ENCODE measurements at regions of chr3 and their contacts with region 1.

Region 1: DNA sequence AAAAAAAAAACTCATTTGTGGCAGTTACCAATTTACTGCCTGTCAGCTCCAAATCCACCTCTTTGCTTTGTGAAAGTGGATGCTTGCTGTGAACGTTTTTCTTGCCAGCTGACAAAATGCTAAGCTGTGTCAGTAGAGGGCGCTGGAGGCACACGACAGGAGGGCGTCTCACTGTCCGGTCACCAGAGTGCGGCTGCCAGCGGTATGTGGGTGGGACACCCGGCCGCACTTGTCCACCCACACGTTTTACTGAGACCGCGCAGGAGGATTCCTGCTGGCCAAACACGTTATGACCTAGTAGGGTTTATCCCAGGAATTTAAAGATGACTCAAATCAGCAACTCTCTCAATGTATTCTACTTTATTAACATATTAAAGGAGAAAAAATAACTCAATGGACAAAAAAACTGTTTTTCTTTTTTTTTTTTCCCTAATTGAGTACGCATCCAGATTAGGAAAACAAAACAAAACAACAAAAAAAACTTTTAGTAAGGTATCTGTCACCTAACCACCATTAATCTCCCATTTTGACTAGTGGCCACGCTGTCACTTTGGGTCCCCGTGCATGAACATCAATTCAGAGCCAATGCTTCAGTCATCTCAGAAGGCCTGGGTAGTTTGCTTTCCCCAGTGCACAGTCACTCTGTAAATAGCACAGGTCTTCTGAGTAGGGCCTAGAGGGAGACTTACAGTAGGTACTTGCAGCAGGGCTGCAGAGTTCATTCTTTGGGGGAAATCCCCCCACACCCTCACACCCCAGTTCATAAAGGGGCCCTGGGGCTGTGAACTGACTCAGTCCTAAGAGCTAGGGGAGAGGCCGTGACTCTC is 43.8 kb upstream of the RPL35A start:
- DNase-seq: peak; percentile 93
- ATAC-seq: peak; percentile 98
- H3K4me3 Mint-ChIP-seq: peak overlapping the region; percentile 20
- H3K27ac Mint-ChIP-seq: peak overlapping the region; percentile 75
- H3K4me1 Mint-ChIP-seq: peaks cover 24% of the 10 kb centered on the region
- H3K27me3 Mint-ChIP-seq: no peaks in the 10 kb centered on the region
- CTCF ChIP-seq: peak; percentile 96

Region 2: DNA sequence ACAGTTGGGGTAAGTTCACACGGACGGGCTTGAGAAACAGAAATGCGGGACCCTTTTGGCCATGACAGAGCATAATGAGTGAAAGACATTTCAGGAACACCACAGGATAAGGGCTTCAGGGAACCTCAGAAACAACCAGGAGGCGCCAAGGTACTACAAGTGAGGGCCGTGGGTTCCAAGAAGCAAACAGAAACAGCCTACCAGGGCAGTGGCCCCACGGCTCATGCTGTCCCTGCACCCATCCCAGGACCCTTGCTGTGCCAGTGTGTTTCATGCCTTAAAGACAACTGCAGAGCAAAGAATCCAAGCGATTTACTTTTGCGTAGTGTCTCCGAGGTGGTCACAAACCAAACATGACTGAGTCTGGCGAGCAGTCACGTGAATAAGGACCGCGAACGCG is 223.5 kb before region 1 on chr3:
- CTCF ChIA-PET with region 1: no interaction called
- POLR2A ChIA-PET with region 1: no interaction called
- intact Hi-C with region 1: no loop called
- DNase-seq: no peak
- ATAC-seq: no peak
- H3K4me3 Mint-ChIP-seq: no peak overlapping the region
- H3K27ac Mint-ChIP-seq: no peak overlapping the region
- H3K4me1 Mint-ChIP-seq: no peaks in the 10 kb centered on the region
- H3K27me3 Mint-ChIP-seq: no peaks in the 10 kb centered on the region
- CTCF ChIP-seq: no peak

Region 3: DNA sequence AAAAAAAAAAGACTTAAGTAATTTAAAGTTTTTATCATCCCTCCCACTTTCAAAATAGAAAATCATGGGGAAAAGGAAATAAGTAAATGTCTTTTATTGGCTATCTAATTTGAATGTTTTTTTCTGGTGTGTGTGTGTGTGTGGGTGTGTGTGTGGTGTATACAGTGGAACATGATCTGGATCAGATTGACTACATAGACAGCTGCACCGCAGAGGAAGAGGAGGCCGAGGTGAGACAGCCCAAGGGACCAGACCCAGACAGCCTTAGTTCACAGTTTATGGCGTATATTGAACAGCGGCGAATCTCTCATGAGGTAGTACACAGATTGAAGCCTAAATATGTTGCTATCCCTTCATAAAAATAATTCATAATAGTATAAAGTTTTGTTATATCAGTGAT is 70.7 kb before region 1 on chr3:
- CTCF ChIA-PET with region 1: no interaction called
- POLR2A ChIA-PET with region 1: no interaction called
- intact Hi-C with region 1: no loop called
- DNase-seq: no peak
- ATAC-seq: no peak
- H3K4me3 Mint-ChIP-seq: no peak overlapping the region
- H3K27ac Mint-ChIP-seq: no peak overlapping the region
- H3K4me1 Mint-ChIP-seq: no peaks in the 10 kb centered on the region
- H3K27me3 Mint-ChIP-seq: no peaks in the 10 kb centered on the region
- CTCF ChIP-seq: no peak

Region 4: GRCh38 chr3:197889204-197889930 is 16.9 kb before region 1 on chr3:
- CTCF ChIA-PET with region 1: interaction called, 12 read pairs
- POLR2A ChIA-PET with region 1: no interaction called
- intact Hi-C with region 1: no loop called
- DNase-seq: no peak
- ATAC-seq: no peak
- H3K4me3 Mint-ChIP-seq: no peak overlapping the region
- H3K27ac Mint-ChIP-seq: no peak overlapping the region
- H3K4me1 Mint-ChIP-seq: peaks cover 5% of the 10 kb centered on the region
- H3K27me3 Mint-ChIP-seq: no peaks in the 10 kb centered on the region
- CTCF ChIP-seq: no peak

Region 5: DNA sequence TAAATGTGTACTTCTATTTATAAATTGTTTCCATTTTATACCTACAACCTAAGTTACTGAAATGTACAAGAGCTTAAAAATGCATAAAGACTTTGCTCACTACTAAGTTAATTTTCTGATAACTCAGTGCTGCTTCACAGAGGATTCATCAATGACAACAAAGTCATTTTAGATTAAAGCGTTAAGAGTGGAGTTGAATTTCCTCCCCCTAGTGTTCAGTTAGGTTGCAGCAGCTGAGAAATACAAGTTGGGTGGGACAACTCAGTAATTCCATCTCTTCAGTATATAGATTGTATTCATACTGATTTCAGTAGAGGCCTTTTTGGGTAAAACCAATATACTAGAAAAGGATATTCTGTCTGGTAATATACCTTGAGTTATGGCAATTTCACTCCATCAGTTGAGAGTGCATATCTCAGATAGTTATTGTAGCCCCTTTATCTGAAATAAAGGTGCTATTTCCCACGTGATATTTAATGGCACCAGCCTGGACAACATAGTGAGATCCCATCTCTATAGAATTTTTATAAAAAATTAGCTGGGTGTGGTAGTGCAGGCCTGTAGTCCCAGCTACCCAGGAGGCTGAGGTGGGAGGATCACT is 36.8 kb after region 1 on chr3:
- CTCF ChIA-PET with region 1: interaction called, 45 read pairs
- POLR2A ChIA-PET with region 1: interaction called, 3 read pairs
- intact Hi-C with region 1: loop called (anchors 5 kb)
- DNase-seq: peak; percentile 46
- ATAC-seq: peak; percentile 92
- H3K4me3 Mint-ChIP-seq: no peak overlapping the region
- H3K27ac Mint-ChIP-seq: no peak overlapping the region
- H3K4me1 Mint-ChIP-seq: peaks cover 4% of the 10 kb centered on the region
- H3K27me3 Mint-ChIP-seq: no peaks in the 10 kb centered on the region
- CTCF ChIP-seq: peak; percentile 91

Region 6: DNA sequence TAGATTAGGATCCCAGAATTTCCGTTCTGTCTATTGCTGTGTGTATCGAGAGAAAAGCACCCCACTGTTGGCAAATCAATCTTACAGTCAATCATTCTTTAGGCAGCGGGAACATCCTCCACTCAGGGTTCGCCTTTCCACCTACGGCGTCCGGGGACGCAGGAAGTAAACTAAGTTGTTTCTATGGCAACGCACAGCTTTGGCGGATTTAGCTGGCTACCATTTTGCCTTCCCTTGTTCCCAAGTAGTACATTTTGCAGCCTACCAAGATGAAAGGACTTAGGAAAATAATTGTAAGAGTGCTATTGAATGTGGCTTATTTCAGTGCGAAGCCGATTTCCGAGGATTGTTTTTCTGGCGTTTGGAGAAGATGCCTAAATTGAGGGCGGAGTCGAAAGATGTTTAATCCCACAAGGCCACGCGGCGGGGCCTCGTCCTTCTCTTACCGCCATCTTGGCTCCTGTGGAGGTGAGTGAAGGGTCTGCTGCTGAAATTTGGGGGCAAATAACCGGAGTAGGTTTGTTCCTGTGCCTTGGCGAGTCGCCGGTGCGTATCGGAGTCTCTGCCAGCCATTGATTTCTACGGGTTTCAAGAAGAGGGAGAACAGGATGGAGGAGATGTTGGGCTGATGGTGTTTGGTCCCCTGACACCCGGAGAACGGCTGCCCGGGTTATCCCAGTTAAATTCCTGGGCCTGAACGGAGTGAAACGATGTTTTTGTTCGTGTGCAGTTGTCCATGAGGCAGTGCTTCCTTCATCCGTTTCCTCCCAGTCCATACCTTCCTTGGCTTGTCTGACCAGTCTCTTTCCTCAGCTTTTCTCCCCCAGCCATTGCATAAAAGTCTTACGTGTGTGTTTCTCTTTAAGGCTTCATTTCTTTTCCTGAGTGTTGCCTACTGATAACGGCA is 43.8 kb after region 1 on chr3 and contains the start of gene RPL35A:
- CTCF ChIA-PET with region 1: interaction called, 11 read pairs
- POLR2A ChIA-PET with region 1: interaction called, 4 read pairs
- intact Hi-C with region 1: no loop called
- DNase-seq: peak; percentile 91
- ATAC-seq: peak; percentile 92
- H3K4me3 Mint-ChIP-seq: peak within 1 kb of the TSS; percentile 95
- H3K27ac Mint-ChIP-seq: peak within 1 kb of the TSS; percentile 99
- H3K4me1 Mint-ChIP-seq: peaks cover 32% of the 10 kb centered on the region
- H3K27me3 Mint-ChIP-seq: no peaks in the 10 kb centered on the region
- CTCF ChIP-seq: no peak
- total RNA-seq, gene RPL35A: 1,685 to 1,707 TPM

Region 7: DNA sequence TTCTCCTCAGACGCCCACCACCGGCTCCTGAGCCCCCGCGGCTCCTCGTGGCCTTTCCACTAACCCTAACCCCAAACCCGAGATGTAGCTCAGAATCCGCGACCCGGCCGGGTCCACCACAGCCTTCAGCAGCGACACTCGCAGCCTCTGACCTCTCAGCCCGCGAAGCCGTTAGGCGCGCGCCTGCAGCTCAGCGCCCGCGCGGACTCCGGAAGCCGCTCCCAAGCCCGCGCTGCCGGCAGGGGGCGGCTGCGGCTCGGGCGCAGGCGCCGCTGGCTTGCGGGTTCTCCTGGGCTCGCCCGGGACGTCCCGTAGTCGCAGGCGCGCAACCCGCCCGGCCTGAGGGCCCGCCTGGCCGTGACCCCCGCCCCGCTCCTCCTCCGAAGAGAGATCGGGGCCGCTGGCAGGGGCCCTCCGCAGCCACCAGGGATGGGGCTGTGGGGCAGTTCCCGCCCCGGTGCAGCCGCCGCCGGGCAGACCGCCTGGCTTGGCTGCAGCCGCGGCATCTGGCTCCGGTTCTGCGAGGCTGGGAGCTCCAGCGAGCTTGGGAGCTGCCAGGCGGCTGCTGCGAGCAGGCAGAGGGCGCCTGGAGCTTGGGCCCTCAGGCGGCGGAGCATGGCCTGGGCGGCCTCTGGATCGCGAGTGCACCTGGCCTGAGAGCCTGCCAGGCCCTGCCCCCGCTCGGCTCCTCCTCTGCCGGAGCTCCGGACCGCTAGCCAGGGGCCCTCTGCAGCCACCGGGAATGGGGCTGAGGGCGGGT is 174.5 kb after region 1 on chr3:
- CTCF ChIA-PET with region 1: interaction called, 15 read pairs
- POLR2A ChIA-PET with region 1: no interaction called
- intact Hi-C with region 1: loop called (anchors 10 kb)
- DNase-seq: peak; percentile 78
- ATAC-seq: peak; percentile 88
- H3K4me3 Mint-ChIP-seq: peak overlapping the region; percentile 82
- H3K27ac Mint-ChIP-seq: peak overlapping the region; percentile 87
- H3K4me1 Mint-ChIP-seq: peaks cover 17% of the 10 kb centered on the region
- H3K27me3 Mint-ChIP-seq: peaks cover 39% of the 10 kb centered on the region
- CTCF ChIP-seq: peak; percentile 78

Measured in activated CD8-positive, alpha-beta T cell treated with anti-CD3 and anti-CD28 coated beads for 36 hours (primary cell).